ENCODE measurements at regions of chr6 and their contacts with region 1.

Region 1: GRCh38 chr6:142952614-142953013 is 7.6 kb upstream of the HIVEP2 start:
- DNase-seq: no peak

Region 2: GRCh38 chr6:142318714-142319113 is 633.9 kb before region 1 on chr6:
- intact Hi-C with region 1: loop called in 1 of 2 experiments (anchors 5 kb)
- DNase-seq: no peak

Region 3: DNA sequence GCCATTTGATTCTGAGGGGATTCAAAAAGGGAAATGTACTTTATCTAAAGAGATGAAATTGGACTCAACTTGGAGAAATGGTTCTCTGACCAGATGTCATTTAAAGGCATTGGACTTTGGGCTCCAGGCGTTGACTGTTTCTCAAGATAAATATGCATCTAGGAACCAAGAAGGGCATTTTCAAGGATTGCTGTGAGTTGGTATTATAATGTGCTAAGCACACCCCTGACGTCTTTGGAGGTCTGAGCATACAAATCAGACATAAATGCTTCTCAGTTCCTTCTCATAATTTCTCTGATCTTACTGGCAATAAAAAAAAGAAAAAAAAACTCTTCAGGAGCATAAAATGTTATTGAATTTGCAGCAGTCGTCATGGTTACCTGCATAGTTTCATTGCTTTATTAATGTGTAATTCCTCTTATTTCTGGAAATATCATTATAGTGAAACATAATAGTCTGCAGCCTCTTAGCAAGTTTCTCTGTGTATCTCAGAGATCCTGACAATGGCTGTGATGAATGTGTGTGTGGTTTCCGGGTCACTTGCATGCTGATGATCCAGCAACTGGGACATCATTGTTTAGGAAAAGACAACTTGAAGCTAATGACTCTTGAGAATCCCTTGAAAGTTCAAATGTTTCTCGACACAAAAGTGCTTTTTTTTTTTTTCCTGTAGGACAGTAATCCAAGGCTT is 244.1 kb after region 1 on chr6:
- intact Hi-C with region 1: loop called in 1 of 2 experiments (anchors 10 kb)
- DNase-seq: no peak

Measured in posterior vena cava (tissue), 2 donors.